ENCODE measurements at regions of chr6 and their contacts with region 1.

Region 1: DNA sequence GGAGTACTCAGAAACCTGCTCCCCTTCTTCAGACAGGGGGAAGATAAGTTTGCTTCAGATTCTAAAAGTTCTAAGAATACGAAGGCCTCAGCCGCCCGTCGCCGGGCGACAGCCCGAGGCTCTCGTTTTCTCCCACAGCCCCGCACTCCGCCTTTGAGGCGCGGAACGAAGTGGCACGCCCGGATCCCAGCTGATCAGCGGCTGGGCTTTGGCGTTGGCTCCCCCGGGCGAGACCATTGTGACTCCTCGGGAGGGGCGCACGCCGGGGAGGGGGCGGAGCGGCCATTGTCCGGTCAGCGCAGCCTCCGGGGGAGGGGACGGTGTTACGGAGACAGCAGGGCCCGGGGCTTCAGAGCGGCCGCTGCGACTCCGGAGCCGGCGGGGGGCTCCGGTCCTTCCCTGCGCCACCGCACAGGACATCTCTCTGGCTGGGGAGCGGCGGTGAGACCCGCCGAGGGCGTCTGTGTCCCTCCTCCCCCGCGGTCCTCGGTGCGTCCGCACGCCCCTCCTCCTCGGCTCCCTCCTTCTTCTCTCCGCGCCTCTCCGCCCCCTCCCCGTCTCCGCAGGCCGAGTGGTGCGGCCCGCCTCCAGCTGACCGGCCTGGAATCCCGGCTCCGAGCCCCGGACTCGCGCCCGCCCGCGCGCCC is at the start of gene ZFAND3:
- DNase-seq: peak; percentile 86
- ATAC-seq: peak; percentile 89
- H3K4me3 ChIP-seq: peak within 1 kb of the TSS; percentile 96
- H3K27ac ChIP-seq: peak within 1 kb of the TSS; percentile 98
- H3K4me1 ChIP-seq: peaks cover 7% of the 10 kb centered on the region
- H3K27me3 ChIP-seq: no peaks in the 10 kb centered on the region
- CTCF ChIP-seq: no peak
- EP300 ChIP-seq: peak in 1 of 2 experiments; percentile 31; a peak in 1 of 4 replicates
- POLR2A ChIP-seq: peak; percentile 59; the same call in 1 of the 2 replicates
- RAD21 ChIP-seq: no peak
- polyA plus RNA-seq, gene ZFAND3: 0.90 to 1.8 TPM

Region 2: GRCh38 chr6:37831457-37831856 is 12.2 kb after region 1 on chr6:
- CTCF ChIA-PET with region 1: interaction called, 7 read pairs
- POLR2A ChIA-PET with region 1: interaction called, 13 read pairs
- RAD21 ChIA-PET with region 1: interaction called, 20 read pairs
- SMC1A ChIA-PET with region 1: interaction called, 18 read pairs
- in situ Hi-C with region 1: no loop called
- intact Hi-C with region 1: no loop called
- DNase-seq: no peak
- ATAC-seq: peak; percentile 52
- H3K4me3 ChIP-seq: no peak overlapping the region
- H3K27ac ChIP-seq: peak overlapping the region; percentile 57
- H3K4me1 ChIP-seq: peaks cover 17% of the 10 kb centered on the region
- H3K27me3 ChIP-seq: no peaks in the 10 kb centered on the region
- CTCF ChIP-seq: no peak
- EP300 ChIP-seq: no peak
- POLR2A ChIP-seq: no peak
- RAD21 ChIP-seq: no peak

Region 3: GRCh38 chr6:37868447-37868825 is 49.1 kb after region 1 on chr6:
- CTCF ChIA-PET with region 1: interaction called, 3 read pairs
- POLR2A ChIA-PET with region 1: interaction called, 3 read pairs
- RAD21 ChIA-PET with region 1: interaction called, 3 read pairs
- SMC1A ChIA-PET with region 1: interaction called, 4 read pairs
- in situ Hi-C with region 1: no loop called
- intact Hi-C with region 1: loop called (anchors 5 kb)
- DNase-seq: no peak
- ATAC-seq: peak; percentile 12; the same call in 2 of the 3 replicates
- H3K4me3 ChIP-seq: no peak overlapping the region
- H3K27ac ChIP-seq: peak overlapping the region; percentile 37
- H3K4me1 ChIP-seq: peaks cover 28% of the 10 kb centered on the region
- H3K27me3 ChIP-seq: no peaks in the 10 kb centered on the region
- CTCF ChIP-seq: no peak
- EP300 ChIP-seq: no peak
- POLR2A ChIP-seq: no peak
- RAD21 ChIP-seq: no peak

Measured in GM12878 (cell line).